Heart left ventricle (tissue), 16 donors: ENCODE measurements at regions of chr1 and their contacts with region 1.

Region 1: DNA sequence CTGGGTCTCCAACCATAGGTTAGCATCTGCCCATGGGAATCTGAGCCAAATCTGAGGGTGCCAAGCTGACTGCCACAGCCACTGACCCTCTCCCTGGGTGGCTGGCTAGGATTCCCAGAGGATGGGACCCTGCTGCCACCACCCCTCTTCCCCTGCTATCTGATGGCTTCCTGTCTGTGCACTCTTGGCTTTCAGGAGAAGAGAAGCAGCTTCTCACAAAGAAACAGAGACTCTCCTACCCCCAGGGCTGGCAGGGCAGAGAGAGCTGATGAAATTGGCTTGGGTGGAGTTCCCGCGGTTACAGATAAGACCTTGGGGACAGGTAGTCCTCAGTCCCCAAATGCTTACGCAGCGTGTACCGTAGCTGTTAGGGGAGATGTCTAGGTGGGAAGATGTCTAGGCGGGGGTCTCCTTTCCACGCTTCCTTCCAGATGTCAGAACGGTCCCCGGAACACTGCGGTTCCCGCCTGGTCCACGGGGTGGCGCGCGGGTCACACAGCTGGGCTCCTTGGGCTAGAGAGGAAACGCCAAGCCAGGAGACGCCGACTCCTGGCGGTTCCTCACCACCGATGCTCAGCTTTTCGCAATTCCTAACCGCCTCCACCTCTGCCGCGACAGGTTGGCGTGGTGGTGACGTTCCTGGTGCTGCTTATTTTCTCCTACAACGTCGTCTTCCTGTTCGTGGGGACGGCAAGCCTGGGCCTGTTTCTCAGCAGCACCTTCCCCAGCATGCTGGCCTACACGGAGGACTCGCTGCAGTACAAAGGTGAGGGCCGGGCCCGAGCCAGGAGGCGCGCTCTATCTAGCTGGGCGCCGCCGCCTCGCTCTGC is 40.1 kb downstream of the ELK4 start:
- DNase-seq: peak; percentile 82 to 91 (median 84)
- ATAC-seq: peak; percentile 76 to 97 (median 95)
- H3K4me3 ChIP-seq: peak overlapping the region in 11 of 12 donors; percentile 19 to 59 (median 48)
- H3K27ac ChIP-seq: peak overlapping the region in 3 of 12 donors; percentile 48 to 64 (median 58)
- H3K4me1 ChIP-seq: peaks cover 0 to 28% (median 13%) of the 10 kb centered on the region in 12 donors
- H3K27me3 ChIP-seq: no peaks in the 10 kb centered on the region
- CTCF ChIP-seq: peak; percentile 95 to 99 (median 98)
- POLR2A ChIP-seq: no peak

Region 2: GRCh38 chr1:205321164-205321958 is 270.4 kb before region 1 on chr1 and contains the start of gene NUAK2:
- intact Hi-C with region 1: no loop called
- DNase-seq: peak; percentile 90 to 96 (median 94)
- ATAC-seq: peak; percentile 89 to 96 (median 95)
- H3K4me3 ChIP-seq: peak within 1 kb of the TSS; percentile 48 to 92 (median 74)
- H3K27ac ChIP-seq: peak within 1 kb of the TSS in 10 of 12 donors; percentile 9 to 86 (median 70)
- H3K4me1 ChIP-seq: peaks cover 12 to 60% (median 35%) of the 10 kb centered on the region in 12 donors
- H3K27me3 ChIP-seq: peaks cover 0 to 8% (median 0%) of the 10 kb centered on the region in 9 donors
- CTCF ChIP-seq: peak in 9 of 12 donors; percentile 17 to 61 (median 32)
- POLR2A ChIP-seq: peak; percentile 20 to 86
- total RNA-seq, gene NUAK2: 0.25 to 2.6 (median 0.82) TPM

Region 3: GRCh38 chr1:205536759-205537361 is 54.9 kb before region 1 on chr1:
- intact Hi-C with region 1: loop called in 2 of 10 experiments (anchors 5 kb)
- DNase-seq: peak in 2 of 5 donors; percentile 53 to 59
- ATAC-seq: peak; percentile 56 to 81 (median 68)
- H3K4me3 ChIP-seq: no peak overlapping the region
- H3K27ac ChIP-seq: peak overlapping the region in 2 of 12 donors; percentile 19 to 21
- H3K4me1 ChIP-seq: peaks cover 0 to 21% (median 6%) of the 10 kb centered on the region in 12 donors
- H3K27me3 ChIP-seq: no peaks in the 10 kb centered on the region
- CTCF ChIP-seq: no peak
- POLR2A ChIP-seq: no peak

Region 4: DNA sequence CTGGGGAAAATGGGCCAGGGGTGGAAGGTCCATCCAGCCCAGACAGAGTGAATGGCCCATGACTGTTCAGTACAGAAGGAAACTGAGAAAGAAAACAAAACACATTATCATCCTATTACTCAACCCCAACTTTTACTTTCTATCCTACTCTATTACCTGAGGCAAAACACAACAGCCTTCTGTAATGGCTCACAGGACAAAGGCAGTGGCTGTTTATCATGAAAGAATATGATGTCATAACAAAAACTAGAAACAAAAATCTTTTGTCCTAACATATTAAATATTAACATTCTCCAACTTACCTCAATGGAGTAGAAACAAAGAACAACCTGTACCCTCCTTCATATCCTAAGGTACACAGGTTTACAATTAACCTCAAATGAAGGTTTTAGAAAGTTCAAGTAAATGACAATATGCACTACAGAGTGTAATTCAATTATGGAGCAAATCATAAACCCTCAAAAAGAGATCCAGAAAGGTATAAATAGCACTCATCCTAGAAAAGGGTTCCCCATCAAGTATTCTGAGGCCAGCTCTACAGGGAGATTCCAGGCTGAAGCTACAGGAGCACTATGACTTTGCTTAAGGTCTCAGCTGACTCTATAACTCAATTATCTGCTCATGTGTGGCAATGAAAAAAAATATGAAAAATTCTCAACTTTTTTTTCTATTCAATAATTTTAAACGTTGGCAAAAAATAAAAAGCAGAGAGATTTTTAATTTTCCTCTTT is 25.0 kb after region 1 on chr1:
- intact Hi-C with region 1: no loop called
- DNase-seq: no peak
- ATAC-seq: no peak
- H3K4me3 ChIP-seq: no peak overlapping the region
- H3K27ac ChIP-seq: no peak overlapping the region
- H3K4me1 ChIP-seq: peaks cover 0 to 5% (median 2%) of the 10 kb centered on the region in 12 donors
- H3K27me3 ChIP-seq: no peaks in the 10 kb centered on the region
- CTCF ChIP-seq: no peak
- POLR2A ChIP-seq: no peak

Region 5: GRCh38 chr1:205658943-205659581 is 67.3 kb after region 1 on chr1:
- intact Hi-C with region 1: loop called (anchors 1 to 2 kb)
- DNase-seq: peak; percentile 78 to 90 (median 83)
- ATAC-seq: peak; percentile 71 to 88 (median 80)
- H3K4me3 ChIP-seq: no peak overlapping the region
- H3K27ac ChIP-seq: no peak overlapping the region
- H3K4me1 ChIP-seq: peaks cover 0 to 16% (median 6%) of the 10 kb centered on the region in 12 donors
- H3K27me3 ChIP-seq: no peaks in the 10 kb centered on the region
- CTCF ChIP-seq: peak; percentile 77 to 91 (median 85)
- POLR2A ChIP-seq: no peak

Region 6: GRCh38 chr1:205983925-205984725 is 392.4 kb after region 1 on chr1:
- intact Hi-C with region 1: loop called in 2 of 10 experiments (anchors 5 kb)
- DNase-seq: peak; percentile 72 to 83 (median 75)
- ATAC-seq: peak; percentile 53 to 86 (median 84)
- H3K4me3 ChIP-seq: no peak overlapping the region
- H3K27ac ChIP-seq: no peak overlapping the region
- H3K4me1 ChIP-seq: peaks cover 0 to 40% (median 17%) of the 10 kb centered on the region in 12 donors
- H3K27me3 ChIP-seq: no peaks in the 10 kb centered on the region
- CTCF ChIP-seq: peak; percentile 56 to 85 (median 76)
- POLR2A ChIP-seq: no peak